ENCODE measurements at regions of chr1 and their contacts with region 1.

Region 1: DNA sequence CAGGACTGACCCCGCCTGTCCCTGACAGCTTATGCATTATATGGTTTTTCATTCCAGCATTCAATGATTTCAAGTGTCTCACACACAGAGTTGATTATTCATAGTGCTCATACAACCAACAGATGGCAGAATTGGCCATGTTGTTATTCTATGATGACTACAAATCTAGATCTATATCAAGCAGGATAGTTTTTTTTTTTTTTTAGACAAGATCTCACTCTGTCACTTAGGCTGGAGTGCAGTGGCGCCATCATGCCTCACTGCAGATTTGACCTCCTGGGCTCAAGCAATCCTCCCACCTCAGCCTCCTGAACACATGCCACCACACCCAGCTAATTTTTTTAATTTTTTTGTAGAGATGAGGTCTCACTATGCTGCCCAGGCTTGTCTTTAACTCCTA is 40.1 kb upstream of the LRRC8D start:
- DNase-seq: peak; percentile 57
- H3K4me3 Mint-ChIP-seq: peak overlapping the region; percentile 39
- H3K27ac Mint-ChIP-seq: peak overlapping the region; percentile 88
- H3K4me1 Mint-ChIP-seq: peaks cover 49% of the 10 kb centered on the region
- H3K27me3 Mint-ChIP-seq: no peaks in the 10 kb centered on the region

Region 2: GRCh38 chr1:89286549-89287180 is 494.1 kb before region 1 on chr1:
- CTCF ChIA-PET with region 1: no interaction called
- intact Hi-C with region 1: no loop called
- DNase-seq: no peak
- H3K4me3 Mint-ChIP-seq: no peak overlapping the region
- H3K27ac Mint-ChIP-seq: peak overlapping the region; percentile 52
- H3K4me1 Mint-ChIP-seq: peaks cover 69% of the 10 kb centered on the region
- H3K27me3 Mint-ChIP-seq: no peaks in the 10 kb centered on the region

Region 3: GRCh38 chr1:89483010-89483756 is 297.5 kb before region 1 on chr1:
- CTCF ChIA-PET with region 1: interaction called, 3 read pairs
- intact Hi-C with region 1: loop called (anchors 1 kb)
- DNase-seq: peak; percentile 93
- H3K4me3 Mint-ChIP-seq: no peak overlapping the region
- H3K27ac Mint-ChIP-seq: no peak overlapping the region
- H3K4me1 Mint-ChIP-seq: peaks cover 12% of the 10 kb centered on the region
- H3K27me3 Mint-ChIP-seq: no peaks in the 10 kb centered on the region

Region 4: DNA sequence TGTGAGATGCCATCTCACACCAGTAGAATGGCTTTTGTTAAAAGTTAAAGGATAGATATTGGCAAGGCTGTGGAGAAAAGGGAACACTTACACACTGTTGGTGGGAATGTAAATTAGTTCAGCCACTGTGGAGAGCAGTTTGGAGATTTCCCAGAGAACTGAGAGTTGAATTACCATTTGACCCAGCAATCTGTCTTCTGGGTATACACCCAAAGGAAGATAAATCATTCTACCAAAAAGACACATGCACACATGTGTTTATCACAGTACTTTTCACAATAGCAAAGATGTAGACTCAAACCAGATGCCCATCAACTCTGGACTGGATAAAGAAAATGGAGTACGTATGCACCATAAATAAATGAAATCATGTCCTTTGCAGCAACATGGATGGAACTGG is 48.5 kb before region 1 on chr1:
- CTCF ChIA-PET with region 1: no interaction called
- intact Hi-C with region 1: no loop called
- DNase-seq: no peak
- H3K4me3 Mint-ChIP-seq: no peak overlapping the region
- H3K27ac Mint-ChIP-seq: no peak overlapping the region
- H3K4me1 Mint-ChIP-seq: peaks cover 42% of the 10 kb centered on the region
- H3K27me3 Mint-ChIP-seq: no peaks in the 10 kb centered on the region

Region 5: GRCh38 chr1:89762779-89763648 is 17.7 kb before region 1 on chr1:
- CTCF ChIA-PET with region 1: interaction called, 28 read pairs
- intact Hi-C with region 1: no loop called
- DNase-seq: peak; percentile 92
- H3K4me3 Mint-ChIP-seq: peak overlapping the region; percentile 86
- H3K27ac Mint-ChIP-seq: peak overlapping the region; percentile 81
- H3K4me1 Mint-ChIP-seq: peaks cover 42% of the 10 kb centered on the region
- H3K27me3 Mint-ChIP-seq: no peaks in the 10 kb centered on the region

Region 6: DNA sequence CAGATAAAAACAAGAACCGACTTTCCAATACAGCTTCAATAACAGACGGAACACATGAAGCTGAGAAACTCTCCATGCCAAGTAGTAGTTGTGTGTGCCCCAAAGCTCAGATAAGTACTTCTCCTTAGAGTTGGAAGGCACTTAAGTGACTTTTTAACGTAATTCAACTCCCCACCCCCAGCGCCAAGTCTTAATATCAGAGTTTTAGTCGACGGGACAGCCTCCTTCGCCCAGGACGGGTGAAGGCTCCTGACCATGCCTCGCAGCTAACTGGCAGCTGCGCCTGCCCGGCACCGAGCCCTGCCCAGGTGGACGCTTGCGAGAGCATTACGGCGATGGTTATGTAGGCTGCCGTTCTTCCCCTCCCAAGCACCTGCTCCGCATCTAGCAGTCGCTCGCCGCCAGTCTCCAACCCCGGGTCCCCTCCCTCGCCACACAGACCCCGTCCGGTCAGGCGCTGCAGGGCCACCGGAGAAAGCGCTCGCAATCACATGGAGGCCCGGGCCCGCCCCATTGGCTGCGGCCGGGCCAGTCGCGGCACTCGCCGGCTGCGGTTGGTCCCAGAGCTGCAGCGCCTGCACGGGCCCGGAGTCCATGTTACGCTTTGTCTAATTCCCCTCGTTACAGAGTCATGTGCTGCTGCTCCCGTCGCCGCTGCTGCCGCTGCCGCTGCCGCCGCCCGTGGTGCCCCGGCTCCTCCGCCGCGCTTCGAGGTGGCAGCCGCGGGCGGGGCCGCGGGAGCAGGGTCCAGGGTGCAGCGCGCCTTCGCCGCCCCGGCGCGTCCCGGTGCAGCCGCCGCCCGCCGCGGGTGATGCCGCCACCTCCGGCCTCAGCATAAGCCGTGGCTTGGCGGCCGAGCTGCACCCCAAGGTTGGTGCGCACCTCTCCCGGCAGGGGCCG is 40.0 kb after region 1 on chr1 and contains the start of gene LRRC8D:
- CTCF ChIA-PET with region 1: interaction called, 3 read pairs
- intact Hi-C with region 1: loop called (anchors 1 kb)
- DNase-seq: peak; percentile 81
- H3K4me3 Mint-ChIP-seq: peak within 1 kb of the TSS; percentile 85
- H3K27ac Mint-ChIP-seq: peak within 1 kb of the TSS; percentile 26
- H3K4me1 Mint-ChIP-seq: peaks cover 34% of the 10 kb centered on the region
- H3K27me3 Mint-ChIP-seq: no peaks in the 10 kb centered on the region
- total RNA-seq, gene LRRC8D: 14.4 to 15.0 TPM

Region 7: DNA sequence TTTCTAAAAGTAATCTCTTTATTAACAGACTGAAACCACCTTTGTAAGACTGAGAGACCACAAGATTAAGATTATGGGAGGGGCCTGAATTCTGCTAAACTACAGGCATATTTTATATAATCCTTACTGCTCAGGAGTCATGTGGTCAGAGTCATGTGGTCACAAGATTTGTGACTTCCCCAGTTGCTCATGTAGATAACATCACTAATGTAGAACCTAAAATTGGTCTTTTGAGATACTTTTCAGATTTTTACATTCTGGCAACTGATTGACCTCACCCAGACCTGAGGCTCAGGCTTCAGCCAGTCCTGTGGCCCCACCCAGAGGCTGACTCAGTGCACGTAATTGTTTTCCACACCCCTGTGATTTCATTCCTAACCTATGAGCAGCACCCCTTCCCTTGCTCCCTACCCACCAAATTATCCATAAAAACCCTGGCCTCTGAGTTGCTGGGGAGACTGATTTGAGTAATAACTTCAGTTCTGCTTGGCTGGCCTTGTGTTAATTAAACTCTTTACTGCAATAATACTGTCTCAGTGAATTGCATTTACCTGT is 172.4 kb after region 1 on chr1:
- CTCF ChIA-PET with region 1: no interaction called
- intact Hi-C with region 1: loop called (anchors 1 kb)
- DNase-seq: peak; percentile 66
- H3K4me3 Mint-ChIP-seq: no peak overlapping the region
- H3K27ac Mint-ChIP-seq: no peak overlapping the region
- H3K4me1 Mint-ChIP-seq: peaks cover 18% of the 10 kb centered on the region
- H3K27me3 Mint-ChIP-seq: no peaks in the 10 kb centered on the region

Region 8: GRCh38 chr1:89987170-89987819 is 206.6 kb after region 1 on chr1:
- CTCF ChIA-PET with region 1: interaction called, 8 read pairs
- intact Hi-C with region 1: loop called (anchors 1 kb)
- DNase-seq: peak; percentile 68
- H3K4me3 Mint-ChIP-seq: no peak overlapping the region
- H3K27ac Mint-ChIP-seq: no peak overlapping the region
- H3K4me1 Mint-ChIP-seq: peaks cover 12% of the 10 kb centered on the region
- H3K27me3 Mint-ChIP-seq: no peaks in the 10 kb centered on the region

Measured in activated naive CD4-positive, alpha-beta T cell treated with anti-CD3 and anti-CD28 coated beads for 36 hours (primary cell).